CD8-positive, alpha-beta T cell (primary cell): ENCODE measurements at regions of chr19 and their contacts with region 1.

Region 1: DNA sequence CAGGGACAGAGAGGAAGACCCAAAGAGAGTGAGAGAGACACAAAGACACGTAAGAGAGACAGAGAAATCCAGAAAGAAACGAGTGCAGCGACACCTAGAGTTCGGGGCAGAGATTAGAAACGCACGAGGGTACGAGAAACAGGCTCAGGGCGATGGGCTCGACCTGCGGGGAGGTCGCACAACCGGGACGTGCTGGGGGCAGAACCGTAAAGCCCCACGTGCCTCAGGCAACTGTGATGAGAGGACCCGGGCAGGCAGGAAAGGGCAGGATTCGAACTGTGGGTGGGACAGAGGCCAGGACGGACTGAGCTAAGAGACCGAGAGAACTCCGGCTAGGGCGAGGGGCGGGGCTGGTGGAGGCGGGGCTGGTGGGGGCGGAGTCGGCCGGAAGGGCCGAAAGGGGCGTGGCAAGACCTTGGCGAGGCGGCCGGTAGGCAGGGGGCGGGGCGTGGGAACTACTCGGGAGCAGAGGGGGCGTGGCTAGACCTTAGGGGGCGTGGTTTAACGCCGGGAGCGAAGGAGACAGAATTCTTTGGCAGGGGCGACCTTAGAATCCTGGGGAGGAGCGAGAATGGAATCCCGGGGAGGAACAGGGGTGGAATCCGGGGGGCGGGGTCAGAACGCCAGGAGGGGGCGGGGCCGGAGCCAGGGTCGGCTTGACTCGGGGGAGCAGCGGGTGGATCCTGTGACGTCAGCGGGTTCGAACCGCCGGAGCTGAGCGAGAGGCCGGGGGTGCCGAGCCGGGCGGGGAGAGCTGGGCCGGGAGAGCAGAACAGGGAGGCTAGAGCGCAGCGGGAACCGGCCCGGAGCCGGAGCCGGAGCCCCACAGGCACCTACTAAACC is at the start of gene NECTIN2:
- DNase-seq: peak; percentile 47 to 85 (median 71)
- ATAC-seq: peak; percentile 68
- H3K4me3 ChIP-seq: peak within 1 kb of the TSS; percentile 39 to 46
- H3K4me3 Mint-ChIP-seq: peak within 1 kb of the TSS; percentile 96
- H3K27ac ChIP-seq: no peak within 1 kb of the TSS
- H3K27ac Mint-ChIP-seq: peak within 1 kb of the TSS; percentile 55
- H3K4me1 ChIP-seq: peaks cover 45% of the 10 kb centered on the region
- H3K4me1 Mint-ChIP-seq: peaks cover 26% of the 10 kb centered on the region
- H3K27me3 ChIP-seq: peaks cover 0 to 18% of the 10 kb centered on the region in 2 experiments
- H3K27me3 Mint-ChIP-seq: peaks cover 19% of the 10 kb centered on the region
- CTCF ChIP-seq: peak; percentile 36
- total RNA-seq, gene NECTIN2: 2.0 to 2.5 TPM

Region 2: DNA sequence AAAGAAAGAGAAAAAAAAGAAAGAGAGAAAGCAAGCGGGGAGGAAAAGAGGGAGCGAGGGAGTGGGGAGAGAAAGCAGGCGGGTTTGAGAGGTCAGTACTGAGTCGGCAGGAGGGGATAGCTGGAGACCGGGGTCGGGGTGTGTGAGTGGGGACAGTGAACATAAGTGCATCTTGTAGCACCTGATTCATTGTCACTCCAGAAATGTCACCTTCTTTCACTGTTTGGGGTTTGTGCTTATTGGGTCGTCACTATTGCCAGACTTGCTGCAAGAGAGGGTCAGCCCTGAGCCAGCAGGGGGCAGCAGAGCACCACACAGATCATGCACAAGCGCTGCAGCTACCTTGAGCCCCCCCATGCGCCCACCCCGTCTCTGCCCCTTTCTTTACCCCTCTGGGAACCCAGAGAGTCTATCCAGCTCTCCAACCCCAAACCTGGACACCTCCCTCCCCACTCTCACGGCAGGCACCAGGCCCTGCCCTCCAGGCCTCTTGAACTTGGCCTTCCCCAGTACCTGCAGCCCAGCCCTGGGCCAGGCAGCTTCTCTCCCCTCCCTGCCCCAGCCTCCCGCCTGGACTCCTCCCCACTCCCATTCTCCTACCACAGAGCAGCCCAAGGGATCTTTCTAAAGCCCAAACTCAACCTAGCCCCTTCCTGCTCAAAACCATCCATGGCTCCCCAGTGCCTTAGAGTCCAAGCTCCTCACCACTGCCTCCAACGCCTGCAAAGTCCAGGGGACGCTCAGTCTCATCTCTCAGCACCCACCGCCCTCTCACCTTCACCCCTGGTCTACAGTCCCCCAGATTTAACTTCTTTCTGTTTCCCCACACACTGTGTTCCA is 156.6 kb before region 1 on chr19:
- CTCF ChIA-PET with region 1: interaction called, 3 read pairs
- POLR2A ChIA-PET with region 1: no interaction called
- intact Hi-C with region 1: loop called (anchors 1 kb)
- DNase-seq: peak; percentile 64 to 87 (median 81)
- ATAC-seq: peak; percentile 59
- H3K4me3 ChIP-seq: no peak overlapping the region
- H3K4me3 Mint-ChIP-seq: no peak overlapping the region
- H3K27ac ChIP-seq: no peak overlapping the region
- H3K27ac Mint-ChIP-seq: no peak overlapping the region
- H3K4me1 ChIP-seq: peaks cover 25% of the 10 kb centered on the region
- H3K4me1 Mint-ChIP-seq: peaks cover 22% of the 10 kb centered on the region
- H3K27me3 ChIP-seq: peaks cover 0 to 4% of the 10 kb centered on the region in 2 experiments
- H3K27me3 Mint-ChIP-seq: peaks cover 16% of the 10 kb centered on the region
- CTCF ChIP-seq: peak; percentile 81

Region 3: GRCh38 chr19:44753932-44754749 is 91.7 kb before region 1 on chr19:
- CTCF ChIA-PET with region 1: no interaction called
- POLR2A ChIA-PET with region 1: no interaction called
- intact Hi-C with region 1: no loop called
- DNase-seq: peak; percentile 13 to 77 (median 66)
- ATAC-seq: peak; percentile 13
- H3K4me3 ChIP-seq: peak overlapping the region; percentile 68 to 84
- H3K4me3 Mint-ChIP-seq: peak overlapping the region; percentile 95
- H3K27ac ChIP-seq: peak overlapping the region; percentile 83 to 95
- H3K27ac Mint-ChIP-seq: peak overlapping the region; percentile 97
- H3K4me1 ChIP-seq: peaks cover 64% of the 10 kb centered on the region
- H3K4me1 Mint-ChIP-seq: peaks cover 64% of the 10 kb centered on the region
- H3K27me3 ChIP-seq: no peaks in the 10 kb centered on the region
- H3K27me3 Mint-ChIP-seq: no peaks in the 10 kb centered on the region
- CTCF ChIP-seq: no peak

Region 4: GRCh38 chr19:44782729-44783128 is 63.1 kb before region 1 on chr19:
- CTCF ChIA-PET with region 1: interaction called, 11 read pairs
- POLR2A ChIA-PET with region 1: no interaction called
- intact Hi-C with region 1: loop called (anchors 1 kb)
- DNase-seq: no peak
- ATAC-seq: no peak
- H3K4me3 ChIP-seq: no peak overlapping the region
- H3K4me3 Mint-ChIP-seq: no peak overlapping the region
- H3K27ac ChIP-seq: no peak overlapping the region
- H3K27ac Mint-ChIP-seq: no peak overlapping the region
- H3K4me1 ChIP-seq: no peaks in the 10 kb centered on the region
- H3K4me1 Mint-ChIP-seq: peaks cover 4% of the 10 kb centered on the region
- H3K27me3 ChIP-seq: peaks cover 0 to 5% of the 10 kb centered on the region in 2 experiments
- H3K27me3 Mint-ChIP-seq: peaks cover 14% of the 10 kb centered on the region
- CTCF ChIP-seq: no peak

Region 5: DNA sequence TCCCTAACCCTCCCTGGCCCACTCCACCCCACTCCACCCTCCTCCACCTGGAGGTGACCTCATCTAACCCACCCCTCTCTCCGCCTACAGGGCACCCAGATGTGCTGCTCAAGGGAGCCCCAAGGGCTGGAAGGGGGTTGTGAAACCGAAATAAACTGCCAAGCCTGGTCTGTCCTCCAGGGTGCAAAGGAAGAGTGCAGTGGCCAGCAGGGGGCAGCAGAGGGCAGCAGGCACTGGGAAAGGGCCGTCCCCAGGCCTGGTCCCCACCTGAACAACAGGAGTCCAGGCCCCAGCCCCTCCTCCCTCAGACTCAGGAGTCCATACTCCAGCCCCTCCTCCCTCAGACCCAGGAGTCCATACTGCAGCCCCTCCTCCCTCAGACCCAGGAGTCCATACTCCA is 45.4 kb before region 1 on chr19:
- CTCF ChIA-PET with region 1: interaction called, 3 read pairs
- POLR2A ChIA-PET with region 1: no interaction called
- intact Hi-C with region 1: loop called (anchors 1 kb)
- DNase-seq: peak; percentile 71 to 88 (median 79)
- ATAC-seq: peak; percentile 92
- H3K4me3 ChIP-seq: no peak overlapping the region
- H3K4me3 Mint-ChIP-seq: no peak overlapping the region
- H3K27ac ChIP-seq: no peak overlapping the region
- H3K27ac Mint-ChIP-seq: no peak overlapping the region
- H3K4me1 ChIP-seq: peaks cover 21% of the 10 kb centered on the region
- H3K4me1 Mint-ChIP-seq: peaks cover 12% of the 10 kb centered on the region
- H3K27me3 ChIP-seq: no peaks in the 10 kb centered on the region
- H3K27me3 Mint-ChIP-seq: peaks cover 3% of the 10 kb centered on the region
- CTCF ChIP-seq: peak; percentile 70

Region 6: GRCh38 chr19:44856421-44857083 is 10.7 kb after region 1 on chr19:
- CTCF ChIA-PET with region 1: no interaction called
- POLR2A ChIA-PET with region 1: no interaction called
- intact Hi-C with region 1: no loop called
- DNase-seq: no peak
- ATAC-seq: no peak
- H3K4me3 ChIP-seq: no peak overlapping the region
- H3K4me3 Mint-ChIP-seq: no peak overlapping the region
- H3K27ac ChIP-seq: no peak overlapping the region
- H3K27ac Mint-ChIP-seq: no peak overlapping the region
- H3K4me1 ChIP-seq: no peaks in the 10 kb centered on the region
- H3K4me1 Mint-ChIP-seq: no peaks in the 10 kb centered on the region
- H3K27me3 ChIP-seq: no peaks in the 10 kb centered on the region
- H3K27me3 Mint-ChIP-seq: peaks cover 8% of the 10 kb centered on the region
- CTCF ChIP-seq: no peak

Region 7: DNA sequence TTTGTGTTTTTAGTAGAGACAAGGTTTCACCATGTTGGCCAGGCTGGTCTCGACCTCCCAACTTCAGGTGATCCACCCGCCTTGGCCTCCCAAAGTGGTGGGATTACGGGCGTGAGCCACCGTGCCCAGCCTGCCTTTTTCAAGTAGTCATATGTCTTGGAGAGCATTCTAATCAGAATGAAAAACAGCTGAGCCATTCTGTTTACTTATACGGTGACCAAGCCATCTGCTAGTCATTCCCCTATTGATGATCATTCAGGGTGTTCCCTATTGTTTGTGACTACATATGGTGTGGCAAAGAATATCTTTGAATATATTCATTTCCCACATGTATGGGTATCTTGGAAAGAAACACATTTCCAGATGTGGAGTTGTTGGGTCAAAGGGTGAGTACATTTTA is 349.9 kb after region 1 on chr19:
- CTCF ChIA-PET with region 1: no interaction called
- POLR2A ChIA-PET with region 1: no interaction called
- intact Hi-C with region 1: no loop called
- DNase-seq: no peak
- ATAC-seq: no peak
- H3K4me3 ChIP-seq: no peak overlapping the region
- H3K4me3 Mint-ChIP-seq: no peak overlapping the region
- H3K27ac ChIP-seq: no peak overlapping the region
- H3K27ac Mint-ChIP-seq: no peak overlapping the region
- H3K4me1 ChIP-seq: no peaks in the 10 kb centered on the region
- H3K4me1 Mint-ChIP-seq: no peaks in the 10 kb centered on the region
- H3K27me3 ChIP-seq: no peaks in the 10 kb centered on the region
- H3K27me3 Mint-ChIP-seq: no peaks in the 10 kb centered on the region
- CTCF ChIP-seq: no peak

Region 8: DNA sequence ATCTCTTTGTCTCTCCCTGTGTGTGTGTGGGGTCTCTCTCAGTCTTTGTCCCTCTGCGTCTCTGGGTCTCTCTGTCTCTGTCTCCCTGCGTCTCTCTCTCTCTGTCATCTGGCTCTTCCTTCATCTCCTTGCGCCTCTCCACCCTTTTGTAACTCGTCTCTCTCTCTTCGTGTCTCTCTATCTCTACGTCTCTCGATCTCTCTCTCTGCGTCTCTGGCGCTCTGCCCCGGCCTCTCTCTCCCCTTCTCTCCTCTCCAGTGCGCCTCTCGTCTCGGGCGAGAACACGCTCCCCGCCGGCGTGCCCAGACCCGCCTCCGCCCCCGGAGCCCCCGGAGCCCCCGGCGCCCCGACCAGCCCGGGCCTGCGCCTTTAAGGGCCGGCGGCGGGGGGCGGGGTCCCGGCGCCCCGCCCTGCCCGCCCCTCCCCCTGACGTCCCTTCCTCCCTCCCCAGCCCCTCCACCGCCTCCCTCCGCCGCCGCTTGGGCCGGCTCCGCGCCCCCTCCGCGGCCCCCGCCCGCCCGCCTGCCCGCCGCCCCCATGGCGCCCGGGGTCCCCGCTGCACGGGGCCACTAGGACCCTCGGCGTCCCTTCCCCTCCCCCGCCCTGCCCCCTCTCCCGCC is 405.1 kb after region 1 on chr19 and contains the start of gene MARK4:
- CTCF ChIA-PET with region 1: no interaction called
- POLR2A ChIA-PET with region 1: no interaction called
- intact Hi-C with region 1: no loop called
- DNase-seq: peak; percentile 17 to 83 (median 55)
- ATAC-seq: peak; percentile 69
- H3K4me3 ChIP-seq: peak within 1 kb of the TSS; percentile 66 to 68
- H3K4me3 Mint-ChIP-seq: peak within 1 kb of the TSS; percentile 93
- H3K27ac ChIP-seq: peak within 1 kb of the TSS; percentile 20 to 67
- H3K27ac Mint-ChIP-seq: peak within 1 kb of the TSS; percentile 72
- H3K4me1 ChIP-seq: peaks cover 39% of the 10 kb centered on the region
- H3K4me1 Mint-ChIP-seq: peaks cover 38% of the 10 kb centered on the region
- H3K27me3 ChIP-seq: no peaks in the 10 kb centered on the region
- H3K27me3 Mint-ChIP-seq: no peaks in the 10 kb centered on the region
- CTCF ChIP-seq: no peak
- total RNA-seq, gene MARK4: 17.2 to 19.9 TPM